PC-9 (cell line): ENCODE measurements at regions of chr7 and their contacts with region 1.

Region 1: DNA sequence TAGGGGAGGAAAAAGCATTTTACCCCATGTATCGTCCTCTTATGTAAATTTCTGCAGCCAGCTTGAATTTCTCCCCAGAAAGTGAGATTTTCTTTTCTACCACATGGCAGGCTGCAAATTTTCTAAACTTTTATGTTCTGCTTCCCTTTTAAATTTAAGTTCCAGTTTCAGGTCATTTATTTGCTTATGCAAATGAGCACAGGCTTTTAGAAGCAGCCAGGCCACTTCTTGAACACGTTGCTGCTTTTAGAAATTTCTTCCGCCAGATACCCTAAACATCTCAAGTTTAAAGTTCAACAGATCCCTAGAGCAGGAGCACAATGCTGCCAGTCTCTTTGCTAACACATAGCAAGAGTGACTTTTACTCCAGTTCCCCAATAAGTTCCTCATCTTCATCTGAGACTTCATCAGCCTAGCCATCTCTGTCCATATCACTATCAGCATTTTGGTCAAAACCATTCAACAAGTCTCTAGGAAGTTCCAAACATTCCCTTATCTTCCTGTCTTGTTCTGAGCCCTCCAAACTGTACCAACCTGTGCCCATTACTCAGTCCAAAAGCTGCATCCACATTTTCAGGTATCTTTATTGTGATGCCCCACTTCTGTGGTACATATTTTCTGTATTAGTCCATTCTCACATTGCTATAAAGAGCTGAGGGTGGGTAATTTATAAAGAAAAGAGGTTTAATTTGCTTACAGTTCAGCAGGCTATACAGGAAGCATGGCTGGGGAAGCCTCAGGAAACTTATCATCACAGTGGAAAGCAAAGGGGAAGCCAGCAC is 16.3 kb downstream of the EZH2 start:
- DNase-seq: no peak
- H3K4me3 ChIP-seq: no peak overlapping the region
- H3K27ac ChIP-seq: no peak overlapping the region
- H3K4me1 ChIP-seq: peaks cover 12% of the 10 kb centered on the region
- H3K27me3 ChIP-seq: no peaks in the 10 kb centered on the region
- CTCF ChIP-seq: no peak

Region 2: DNA sequence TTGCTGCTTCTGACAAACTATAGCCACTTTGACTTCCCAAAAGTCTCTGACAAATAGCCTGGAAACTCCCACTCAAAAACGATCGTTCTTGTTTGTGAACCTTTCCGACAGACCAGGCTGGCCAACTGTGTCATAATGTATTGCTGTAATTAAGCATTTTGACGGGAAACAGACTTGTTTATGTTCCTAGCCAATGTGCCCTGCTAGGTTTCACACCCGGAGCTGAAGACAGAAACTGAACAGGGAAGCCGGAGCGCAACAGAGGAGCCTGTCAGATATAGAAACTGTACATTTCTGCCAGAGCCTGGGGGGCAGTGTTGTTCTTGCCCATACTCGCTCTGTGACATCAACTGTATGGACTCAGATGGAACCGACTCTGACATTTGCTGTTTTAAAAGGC is 332.6 kb before region 1 on chr7:
- CTCF ChIA-PET with region 1: no interaction called
- POLR2A ChIA-PET with region 1: no interaction called
- intact Hi-C with region 1: no loop called
- DNase-seq: no peak
- H3K4me3 ChIP-seq: no peak overlapping the region
- H3K27ac ChIP-seq: no peak overlapping the region
- H3K4me1 ChIP-seq: no peaks in the 10 kb centered on the region
- H3K27me3 ChIP-seq: peaks cover 28% of the 10 kb centered on the region
- CTCF ChIP-seq: no peak

Region 3: DNA sequence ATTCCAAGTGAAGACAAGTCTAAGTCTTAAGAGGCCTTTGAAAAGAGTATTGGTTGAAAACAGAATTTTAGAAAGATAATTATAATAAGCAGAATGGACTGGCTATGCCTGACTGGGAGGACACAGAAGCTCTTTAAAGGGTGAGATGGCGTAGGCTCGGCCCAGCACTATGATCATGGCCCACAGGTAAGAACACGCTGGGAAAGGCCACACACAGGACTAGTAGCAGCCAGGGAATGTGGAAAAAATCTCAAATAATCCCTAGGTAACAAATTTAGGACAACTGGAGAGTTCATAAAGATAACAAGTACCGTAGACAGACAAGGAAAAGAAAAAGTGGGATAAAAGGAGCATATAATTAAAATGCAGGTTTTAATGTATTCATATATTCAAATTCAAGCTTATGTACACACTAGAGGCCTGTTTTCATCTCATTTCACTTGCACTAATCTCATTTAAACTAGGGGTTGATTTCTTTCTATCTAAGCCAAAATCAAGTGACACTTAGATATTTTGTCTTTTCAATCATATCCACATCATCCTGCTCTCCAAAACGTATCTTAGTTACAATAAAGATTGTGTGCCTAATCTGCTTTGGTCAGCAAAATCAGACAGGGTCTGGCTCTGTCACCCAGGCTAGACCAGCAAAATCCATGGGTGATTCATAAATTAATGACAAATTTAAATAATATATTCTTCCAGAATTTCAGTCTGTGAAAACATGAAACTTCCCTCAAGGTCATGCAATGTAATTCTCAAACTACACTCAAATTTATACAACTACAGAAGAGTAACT is 36.7 kb before region 1 on chr7:
- CTCF ChIA-PET with region 1: no interaction called
- POLR2A ChIA-PET with region 1: no interaction called
- intact Hi-C with region 1: loop called (anchors 1 kb)
- DNase-seq: no peak
- H3K4me3 ChIP-seq: no peak overlapping the region
- H3K27ac ChIP-seq: no peak overlapping the region
- H3K4me1 ChIP-seq: no peaks in the 10 kb centered on the region
- H3K27me3 ChIP-seq: no peaks in the 10 kb centered on the region
- CTCF ChIP-seq: no peak